ENCODE measurements at regions of chr19 and their contacts with region 1.

Region 1: DNA sequence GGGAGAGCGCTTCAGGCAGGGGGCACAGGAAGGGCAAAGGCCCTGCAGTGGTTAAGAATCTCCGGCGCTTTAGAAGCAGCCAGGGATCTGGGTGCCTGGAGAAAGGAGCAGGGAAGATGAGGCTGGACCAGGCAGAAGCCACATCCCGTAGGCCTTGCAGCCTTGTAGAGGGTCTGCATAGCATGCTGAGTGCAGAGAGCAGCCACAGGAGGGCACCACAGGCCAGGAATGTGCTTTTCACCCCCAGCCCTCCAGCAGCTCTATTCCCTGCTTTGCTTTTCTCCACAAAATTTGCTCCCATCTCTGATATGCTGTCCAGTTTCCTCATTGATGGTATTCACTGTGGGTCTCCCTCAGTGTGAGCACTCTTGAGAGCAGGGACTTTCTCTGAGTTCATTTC is 5.7 kb downstream of the WDR62 start:
- DNase-seq: peak; percentile 54 to 97 (median 80)

Region 2: DNA sequence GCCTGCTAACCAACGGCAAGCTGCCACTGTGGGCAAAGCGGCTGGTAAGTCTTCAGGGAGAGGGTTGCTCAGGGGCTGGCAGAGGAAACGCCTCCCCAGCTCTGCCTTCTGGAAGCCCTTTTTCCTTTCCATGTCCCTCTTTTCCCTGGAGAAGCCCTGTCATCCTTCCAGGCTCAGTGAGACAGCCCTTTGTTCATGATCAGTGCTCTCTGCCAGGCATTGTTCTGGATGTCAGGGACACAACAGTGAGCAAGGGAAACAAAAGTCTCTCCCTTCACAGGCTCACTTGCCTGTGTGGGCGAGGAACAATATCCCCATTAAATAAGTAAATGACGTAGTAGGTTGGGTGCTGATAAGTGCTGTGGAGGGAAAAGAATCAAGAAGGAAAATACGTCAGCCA is 36.6 kb after region 1 on chr19:
- intact Hi-C with region 1: loop called (anchors 5 kb)
- DNase-seq: peak in 8 of 10 donors; percentile 44 to 93 (median 65)

Region 3: GRCh38 chr19:36114763-36115452 is 54.5 kb after region 1 on chr19 and contains the start of gene POLR2I:
- intact Hi-C with region 1: loop called (anchors 1 kb)
- DNase-seq: peak; percentile 99 to 100 (median 100)

Region 4: GRCh38 chr19:36132489-36132891 is 72.1 kb after region 1 on chr19:
- intact Hi-C with region 1: loop called (anchors 5 kb)
- DNase-seq: no peak

Region 5: DNA sequence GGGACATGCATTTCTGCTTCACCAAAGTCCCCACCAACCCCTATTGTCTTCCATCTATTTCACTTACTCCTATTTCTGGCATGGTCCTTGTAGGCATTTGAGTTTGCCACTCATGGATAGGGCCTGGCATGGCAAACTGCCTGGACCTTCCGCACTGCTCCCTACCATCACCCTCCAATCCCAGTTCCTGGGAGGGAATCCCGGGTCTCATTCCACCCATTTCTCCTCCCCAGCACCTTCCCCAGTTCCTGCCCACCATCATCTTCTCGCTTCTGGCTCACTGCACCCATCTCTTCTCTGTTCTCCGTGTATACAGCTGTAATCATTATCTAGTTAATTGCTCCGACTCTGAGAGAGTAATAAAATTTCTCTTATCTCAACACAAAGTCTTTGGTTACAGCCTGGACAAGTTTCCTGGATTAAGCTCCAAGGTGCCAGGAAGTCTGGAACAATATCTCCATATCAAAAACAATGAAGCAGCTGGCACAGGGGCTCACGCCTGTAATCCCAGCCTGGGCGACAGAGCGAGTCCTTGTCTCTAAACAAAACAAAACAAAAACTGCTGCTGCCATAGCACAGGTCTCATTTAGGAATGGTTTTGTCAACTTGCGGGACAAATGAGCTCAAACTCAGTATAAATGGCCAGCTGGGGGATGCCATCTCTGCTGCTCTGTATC is 108.8 kb after region 1 on chr19:
- intact Hi-C with region 1: loop called (anchors 1 kb)
- DNase-seq: peak in 1 of 10 donors; percentile 22